ENCODE measurements at regions of chr9 and their contacts with region 1.

Region 1: GRCh38 chr9:95127249-95128176 is 190.0 kb downstream of the FANCC start:
- DNase-seq: peak; percentile 88 to 95 (median 90)
- H3K4me3 ChIP-seq: peak overlapping the region; percentile 9 to 53 (median 22)
- H3K27ac ChIP-seq: no peak overlapping the region
- H3K4me1 ChIP-seq: peaks cover 0 to 9% (median 8%) of the 10 kb centered on the region in 3 donors
- H3K27me3 ChIP-seq: no peaks in the 10 kb centered on the region
- CTCF ChIP-seq: peak; percentile 98

Region 2: DNA sequence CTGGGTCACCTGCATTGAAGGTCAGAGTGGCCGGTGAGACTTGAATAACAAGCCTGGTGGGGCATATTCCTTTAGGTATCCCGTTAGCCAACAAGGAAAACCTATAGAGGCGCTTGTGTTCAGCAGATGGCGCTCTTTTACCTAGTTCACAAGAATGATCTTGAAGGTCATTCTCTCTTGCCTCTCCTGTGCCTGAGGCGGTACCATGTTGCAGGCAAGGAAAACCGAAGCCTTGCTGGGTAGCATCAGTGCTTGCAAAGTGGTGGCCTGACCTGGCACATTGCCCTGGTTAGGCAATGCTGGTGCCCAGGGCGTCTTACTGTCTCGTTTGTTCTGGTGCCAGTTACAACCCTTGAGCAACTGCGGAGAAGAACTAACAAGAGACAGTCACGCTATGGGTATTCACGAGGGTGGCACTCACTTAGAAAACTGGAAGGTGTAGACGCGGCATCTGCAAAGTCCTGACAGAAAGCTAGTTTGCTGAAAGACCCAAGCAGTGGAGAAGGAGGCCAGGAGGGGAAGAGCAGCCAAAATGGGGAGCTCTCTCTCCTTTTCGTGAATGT is 344.3 kb before region 1 on chr9:
- intact Hi-C with region 1: loop called (anchors 10 kb)
- DNase-seq: peak; percentile 79 to 94 (median 87)
- H3K4me3 ChIP-seq: no peak overlapping the region
- H3K27ac ChIP-seq: peak overlapping the region in 1 of 2 donors; percentile 47
- H3K4me1 ChIP-seq: peaks cover 0 to 4% (median 2%) of the 10 kb centered on the region in 3 donors
- H3K27me3 ChIP-seq: no peaks in the 10 kb centered on the region
- CTCF ChIP-seq: peak; percentile 71

Measured in kidney (tissue), 22 donors.